Heart left ventricle (tissue), 16 donors: ENCODE measurements at regions of chr10 and their contacts with region 1.

Region 1: GRCh38 chr10:4344511-4344994 is 481.5 kb upstream of the AKR1E2 start:
- DNase-seq: peak; percentile 65 to 80 (median 65)
- ATAC-seq: peak; percentile 94 to 97 (median 95)
- H3K4me3 ChIP-seq: peak overlapping the region in 3 of 12 donors; percentile 2 to 25 (median 22)
- H3K27ac ChIP-seq: peak overlapping the region; percentile 56 to 84 (median 69)
- H3K4me1 ChIP-seq: peaks cover 0 to 33% (median 18%) of the 10 kb centered on the region in 12 donors
- H3K27me3 ChIP-seq: no peaks in the 10 kb centered on the region
- CTCF ChIP-seq: peak in 5 of 12 donors; percentile 3 to 28 (median 18)
- POLR2A ChIP-seq: no peak

Region 2: DNA sequence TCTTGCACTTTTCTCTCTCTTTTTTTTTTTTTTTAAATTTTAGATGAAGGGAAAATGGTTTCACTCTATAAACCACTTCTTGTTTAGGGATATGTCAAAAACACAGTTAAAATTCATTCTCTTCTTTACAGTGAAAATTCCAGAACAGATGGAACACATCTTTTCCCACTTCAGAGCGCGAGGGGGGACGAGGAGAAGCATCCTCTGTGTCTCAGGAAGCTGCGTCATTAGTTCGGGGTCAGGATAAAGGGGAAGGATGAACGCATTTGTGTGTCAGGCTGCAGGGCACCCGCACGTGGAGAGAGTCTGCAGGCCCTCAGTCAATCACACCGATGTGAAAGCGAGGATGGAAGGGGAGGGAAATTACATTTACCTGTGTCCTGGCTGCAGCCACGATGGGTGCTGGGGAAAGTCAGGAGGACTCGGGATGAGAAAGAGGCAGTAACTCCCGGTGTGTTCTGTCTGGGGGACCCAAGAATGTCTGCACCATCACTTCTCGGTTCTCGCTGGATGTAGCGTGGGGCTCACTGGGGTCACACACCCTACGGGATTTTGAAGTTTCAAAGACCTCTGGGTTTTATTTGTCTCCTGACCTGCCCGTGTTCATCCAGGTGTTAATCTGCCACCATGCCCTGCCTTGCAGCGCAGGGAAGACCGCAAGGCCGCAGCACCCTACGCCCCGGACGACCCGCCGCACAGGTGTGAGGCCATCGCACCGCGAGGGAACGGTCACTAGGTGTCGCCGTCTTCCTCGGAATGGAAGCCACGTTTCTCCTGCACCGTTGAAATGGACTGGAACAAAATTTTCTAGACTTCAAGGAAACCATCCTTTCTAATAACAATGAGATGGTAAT is 1105.3 kb before region 1 on chr10:
- intact Hi-C with region 1: loop called in 1 of 10 experiments (anchors 10 kb)
- DNase-seq: peak; percentile 70 to 85 (median 75)
- ATAC-seq: peak; percentile 59 to 88 (median 82)
- H3K4me3 ChIP-seq: peak overlapping the region in 8 of 12 donors; percentile 6 to 36 (median 24)
- H3K27ac ChIP-seq: peak overlapping the region in 8 of 12 donors; percentile 39 to 75 (median 54)
- H3K4me1 ChIP-seq: peaks cover 0 to 10% (median 3%) of the 10 kb centered on the region in 12 donors
- H3K27me3 ChIP-seq: no peaks in the 10 kb centered on the region
- CTCF ChIP-seq: peak; percentile 84 to 98 (median 94)
- POLR2A ChIP-seq: no peak

Region 3: GRCh38 chr10:3805791-3806461 is 538.6 kb before region 1 on chr10:
- intact Hi-C with region 1: loop called in 1 of 10 experiments (anchors 10 kb)
- DNase-seq: peak in 4 of 5 donors; percentile 53 to 76 (median 59)
- ATAC-seq: peak in 3 of 4 donors; percentile 8 to 47 (median 43)
- H3K4me3 ChIP-seq: peak overlapping the region in 6 of 12 donors; percentile 4 to 31 (median 9)
- H3K27ac ChIP-seq: peak overlapping the region; percentile 66 to 96 (median 84)
- H3K4me1 ChIP-seq: peaks cover 0 to 94% (median 76%) of the 10 kb centered on the region in 12 donors
- H3K27me3 ChIP-seq: no peaks in the 10 kb centered on the region
- CTCF ChIP-seq: no peak
- POLR2A ChIP-seq: no peak

Region 4: GRCh38 chr10:4081685-4082111 is 262.9 kb before region 1 on chr10:
- intact Hi-C with region 1: loop called in 1 of 10 experiments (anchors 10 kb)
- DNase-seq: peak in 3 of 5 donors; percentile 43 to 55 (median 47)
- ATAC-seq: peak in 3 of 4 donors; percentile 28 to 57 (median 57)
- H3K4me3 ChIP-seq: no peak overlapping the region
- H3K27ac ChIP-seq: peak overlapping the region in 10 of 12 donors; percentile 40 to 59 (median 52)
- H3K4me1 ChIP-seq: peaks cover 0 to 55% (median 32%) of the 10 kb centered on the region in 12 donors
- H3K27me3 ChIP-seq: no peaks in the 10 kb centered on the region
- CTCF ChIP-seq: no peak
- POLR2A ChIP-seq: no peak

Region 5: DNA sequence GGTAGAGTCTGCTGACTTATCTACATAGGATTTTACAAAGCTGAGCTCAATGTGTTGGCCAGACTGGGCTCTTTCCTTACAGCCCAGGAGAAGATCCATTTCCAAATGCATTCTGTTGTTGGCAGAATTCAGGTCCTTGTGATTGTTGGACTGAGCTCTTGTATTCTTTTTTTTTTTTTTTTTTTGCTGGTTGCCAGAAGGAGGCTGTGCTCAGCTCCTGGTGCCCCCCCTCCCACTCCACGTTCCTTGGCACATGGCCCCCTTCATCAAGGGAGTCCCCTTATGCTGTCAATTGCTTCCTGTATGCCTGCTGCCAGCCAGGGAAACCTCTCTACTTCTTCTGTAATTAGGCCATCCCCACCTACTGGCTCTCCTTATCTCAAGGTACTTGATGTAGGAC is 36.6 kb before region 1 on chr10:
- intact Hi-C with region 1: loop called in 1 of 10 experiments (anchors 5 kb)
- DNase-seq: no peak
- ATAC-seq: peak in 1 of 4 donors; percentile 29
- H3K4me3 ChIP-seq: no peak overlapping the region
- H3K27ac ChIP-seq: peak overlapping the region in 4 of 12 donors; percentile 0 to 50 (median 18)
- H3K4me1 ChIP-seq: peaks cover 0 to 32% (median 7%) of the 10 kb centered on the region in 12 donors
- H3K27me3 ChIP-seq: no peaks in the 10 kb centered on the region
- CTCF ChIP-seq: no peak
- POLR2A ChIP-seq: no peak